Prostate gland (tissue), 2 donors: ENCODE measurements at regions of chr11 and their contacts with region 1.

Region 1: DNA sequence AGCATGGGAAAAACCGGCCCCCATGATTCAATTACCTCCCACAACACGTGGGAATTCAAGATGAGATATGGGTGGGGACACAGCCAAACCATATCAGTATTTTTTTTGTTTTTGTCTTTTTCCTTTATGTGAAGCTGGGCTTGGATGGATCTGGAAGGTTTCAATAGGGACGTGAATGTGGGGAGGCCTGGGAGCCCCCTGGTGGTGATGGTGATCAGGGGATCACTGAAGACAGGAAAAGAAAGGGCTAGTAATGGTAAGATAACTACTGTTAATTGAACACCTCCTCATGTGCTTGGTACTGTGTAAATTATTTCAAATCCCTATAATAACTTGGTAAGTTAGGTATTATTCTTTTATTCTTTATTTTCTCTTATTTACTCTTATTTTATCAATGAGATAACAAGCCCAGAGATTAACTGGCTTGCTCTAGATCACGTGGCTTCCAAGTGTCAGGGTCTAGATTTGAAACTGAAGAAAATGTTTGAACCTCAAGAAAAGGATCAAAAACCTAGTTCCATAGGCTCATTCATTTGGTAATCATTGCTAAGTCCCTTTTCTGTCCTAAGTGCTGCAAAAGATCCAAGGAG is 364.2 kb downstream of the TENM4 start:
- DNase-seq: peak; percentile 33
- H3K4me3 ChIP-seq: no peak overlapping the region
- H3K27ac ChIP-seq: no peak overlapping the region
- H3K4me1 ChIP-seq: no peaks in the 10 kb centered on the region
- H3K27me3 ChIP-seq: no peaks in the 10 kb centered on the region
- CTCF ChIP-seq: peak in 3 of 4 experiments; percentile 52 to 58 (median 57)
- POLR2A ChIP-seq: no peak

Region 2: DNA sequence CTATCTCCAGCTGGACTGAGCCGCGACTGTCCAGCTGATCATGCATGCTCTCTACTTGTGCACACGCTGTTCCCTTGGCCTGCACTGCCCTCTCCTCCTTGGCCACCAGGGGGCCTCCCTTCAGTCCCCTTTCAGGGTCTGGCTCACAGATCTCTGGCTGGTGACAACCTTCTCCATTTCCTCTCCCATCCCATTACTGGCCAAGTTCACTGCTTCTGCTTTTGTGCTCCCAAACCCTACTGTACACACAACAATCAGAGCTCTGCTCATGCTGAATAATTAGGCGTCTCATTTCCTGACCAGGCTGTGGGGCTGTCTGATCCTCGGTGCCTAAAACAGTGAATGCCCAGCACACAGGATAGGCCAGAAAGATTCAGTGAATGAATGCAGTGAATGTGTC is 278.0 kb before region 1 on chr11:
- intact Hi-C with region 1: loop called (anchors 10 kb)
- DNase-seq: no peak
- H3K4me3 ChIP-seq: no peak overlapping the region
- H3K27ac ChIP-seq: no peak overlapping the region
- H3K4me1 ChIP-seq: peaks cover 11% of the 10 kb centered on the region
- H3K27me3 ChIP-seq: no peaks in the 10 kb centered on the region
- CTCF ChIP-seq: peak in 3 of 4 experiments; percentile 52 to 62 (median 56)
- POLR2A ChIP-seq: no peak